Kidney (tissue), 22 donors: ENCODE measurements at regions of chr20 and their contacts with region 1.

Region 1: GRCh38 chr20:23349338-23350195 is 1.0 kb upstream of the NXT1 start:
- DNase-seq: peak in 4 of 5 donors; percentile 77 to 95 (median 91)
- H3K4me3 ChIP-seq: peak overlapping the region; percentile 73 to 89 (median 75)
- H3K27ac ChIP-seq: peak overlapping the region; percentile 98 to 100
- H3K4me1 ChIP-seq: peaks cover 0 to 19% (median 11%) of the 10 kb centered on the region in 3 donors
- H3K27me3 ChIP-seq: no peaks in the 10 kb centered on the region
- CTCF ChIP-seq: peak; percentile 45

Region 2: DNA sequence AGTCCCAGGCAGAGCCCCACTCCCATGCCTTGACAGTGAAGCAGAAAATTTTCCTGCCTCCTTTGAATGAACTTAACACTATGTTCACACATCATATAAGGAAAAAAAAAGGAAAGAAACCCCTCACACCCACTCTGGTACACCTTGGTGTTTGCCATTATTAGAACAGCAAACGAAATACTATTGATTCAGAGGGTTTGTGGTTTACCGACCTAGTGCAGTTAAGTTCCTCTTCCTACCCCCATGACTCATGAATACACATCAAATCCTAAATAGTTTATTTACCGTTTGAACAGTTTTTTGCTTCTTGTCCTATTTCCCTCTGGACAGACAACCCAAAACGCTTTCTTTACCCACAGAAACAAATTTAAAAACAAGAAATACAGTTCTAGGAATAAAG is 1002.9 kb before region 1 on chr20:
- intact Hi-C with region 1: loop called (anchors 10 kb)
- DNase-seq: no peak
- H3K4me3 ChIP-seq: no peak overlapping the region
- H3K27ac ChIP-seq: no peak overlapping the region
- H3K4me1 ChIP-seq: no peaks in the 10 kb centered on the region
- H3K27me3 ChIP-seq: no peaks in the 10 kb centered on the region
- CTCF ChIP-seq: no peak